H1 (cell line): ENCODE measurements at regions of chr4 and their contacts with region 1.

Region 1: DNA sequence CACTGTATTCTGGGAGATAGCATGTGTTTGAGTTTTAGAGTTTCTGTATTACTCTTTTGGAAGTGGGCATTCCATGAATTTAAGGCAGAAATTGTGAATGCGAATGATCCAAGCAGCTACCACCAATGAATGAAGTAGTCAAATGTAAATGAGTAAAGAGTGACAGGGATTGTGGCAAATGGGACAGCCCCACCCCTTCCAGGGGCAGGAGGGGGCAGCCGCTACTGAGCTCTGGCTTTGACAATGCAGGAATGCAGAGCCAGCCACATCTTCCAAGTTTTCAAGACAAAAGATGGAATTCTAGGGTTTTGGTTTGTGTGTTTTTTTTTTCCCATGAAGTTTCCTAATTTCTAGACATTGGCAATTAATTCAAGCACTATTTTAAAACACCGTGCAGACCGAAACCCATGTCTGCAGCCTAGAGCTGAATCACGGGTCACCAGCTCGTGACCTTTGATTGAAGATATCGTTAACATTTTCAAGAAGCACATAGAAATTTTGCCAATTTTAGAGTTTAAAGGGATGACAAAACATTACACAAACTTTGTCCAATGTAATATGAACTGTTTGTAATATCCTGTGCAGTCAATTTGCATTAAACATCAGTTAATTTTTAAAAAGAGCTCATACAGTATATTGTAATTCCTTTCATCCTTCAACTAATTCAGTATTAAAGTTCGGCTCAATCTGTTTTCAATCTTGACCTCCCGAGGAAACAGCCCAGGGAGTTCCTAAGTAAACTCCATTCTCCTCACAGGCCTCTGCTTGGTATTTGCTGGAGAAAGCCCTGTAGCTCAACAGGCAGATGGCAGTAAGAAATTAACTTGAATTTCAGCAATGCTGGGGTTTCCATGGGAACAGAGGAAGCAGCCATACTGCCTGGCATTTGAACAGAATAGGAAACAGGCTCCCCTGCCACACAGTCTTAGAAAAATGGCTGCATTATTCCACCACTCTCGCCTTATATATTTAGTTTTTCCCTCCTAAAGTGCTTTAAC is 83.4 kb downstream of the UCHL1 start:
- DNase-seq: no peak
- H3K4me3 ChIP-seq: no peak overlapping the region
- H3K27ac ChIP-seq: no peak overlapping the region
- H3K4me1 ChIP-seq: peaks cover 0 to 3% (median 0%) of the 10 kb centered on the region in 4 experiments; a peak in 4 of 7 replicates
- H3K27me3 ChIP-seq: no peaks in the 10 kb centered on the region
- CTCF ChIP-seq: no peak
- EP300 ChIP-seq: no peak
- POLR2A ChIP-seq: no peak
- RAD21 ChIP-seq: peak in 1 of 2 experiments; percentile 28; a peak in 2 of 4 replicates

Region 2: DNA sequence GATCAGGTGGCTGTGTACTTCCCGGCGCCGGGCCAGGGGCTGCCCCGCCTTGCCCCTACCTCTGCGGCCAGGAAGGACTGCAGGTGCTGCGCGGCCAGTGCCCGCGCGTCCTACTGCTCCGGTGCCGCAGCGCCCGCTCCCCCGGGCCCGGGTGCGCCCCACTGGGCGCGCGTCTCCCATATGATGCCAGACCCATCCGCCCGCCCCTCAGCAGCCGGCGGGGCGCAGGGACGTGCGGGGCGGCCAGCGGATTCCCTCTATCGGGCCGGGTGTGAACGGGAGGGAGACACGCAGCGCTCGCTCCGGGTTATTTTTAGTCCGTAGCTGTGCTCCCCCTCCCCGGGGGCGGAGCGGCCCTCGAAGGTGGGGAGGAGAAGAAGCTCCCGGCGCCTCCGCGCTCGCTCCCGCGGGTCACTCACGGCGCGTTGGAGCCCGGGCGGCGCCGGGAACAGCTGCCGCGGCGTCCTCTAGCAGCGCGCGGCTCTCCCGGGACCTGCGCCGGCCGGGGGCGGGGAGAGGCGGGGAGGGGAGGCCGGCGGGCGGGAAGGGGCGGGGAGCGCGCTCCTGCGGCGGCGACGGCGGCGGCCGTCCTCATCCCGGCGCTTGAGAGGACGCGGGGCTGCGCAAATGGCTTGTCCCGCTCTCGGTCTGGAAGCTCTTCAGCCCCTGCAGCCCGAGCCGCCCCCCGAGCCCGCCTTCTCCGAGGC is 20.3 kb after region 1 on chr4:
- CTCF ChIA-PET with region 1: interaction called, 20 read pairs
- POLR2A ChIA-PET with region 1: interaction called, 6 read pairs
- DNase-seq: peak in 1 of 2 experiments; percentile 68
- H3K4me3 ChIP-seq: peak overlapping the region; percentile 60 to 75 (median 63)
- H3K27ac ChIP-seq: no peak overlapping the region
- H3K4me1 ChIP-seq: peaks cover 15 to 32% (median 22%) of the 10 kb centered on the region in 4 experiments
- H3K27me3 ChIP-seq: peaks cover 36 to 70% (median 64%) of the 10 kb centered on the region in 4 experiments
- CTCF ChIP-seq: no peak
- EP300 ChIP-seq: no peak
- POLR2A ChIP-seq: no peak
- RAD21 ChIP-seq: no peak